ENCODE measurements at regions of chr19 and their contacts with region 1.

Region 1: DNA sequence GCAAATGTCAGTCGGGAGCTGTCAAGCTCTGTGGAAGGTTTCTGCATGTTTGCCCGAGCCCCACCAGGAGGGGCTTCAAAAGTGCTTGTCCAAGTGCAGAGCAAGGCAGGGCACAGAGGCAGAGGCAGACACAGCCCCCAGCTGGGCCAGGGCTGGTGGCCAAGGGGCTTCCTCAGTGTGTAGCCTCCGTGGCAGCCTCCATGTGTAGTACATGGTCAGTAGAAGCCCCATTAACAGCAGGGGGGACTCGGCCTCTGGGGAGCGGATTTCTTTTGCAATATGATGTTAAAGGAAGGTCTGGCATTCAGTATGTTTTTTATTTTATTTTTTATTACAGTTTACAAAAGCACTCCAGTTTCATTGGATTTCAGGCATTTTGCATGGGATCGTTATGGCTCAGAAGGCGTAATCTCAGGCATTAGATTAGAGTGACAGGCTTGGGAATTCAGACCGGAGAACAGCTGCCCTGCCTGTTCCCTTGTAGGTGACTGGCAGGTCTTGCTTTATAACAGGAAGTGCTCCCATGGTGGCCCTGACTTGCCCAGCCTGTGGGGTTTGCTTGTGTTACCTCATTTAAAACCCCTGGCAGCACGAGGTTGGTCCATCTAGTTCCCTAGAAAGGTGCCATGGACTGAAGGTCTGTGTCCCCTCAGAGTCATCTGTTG is 129.2 kb downstream of the KDM4B start:
- DNase-seq: no peak
- H3K4me3 ChIP-seq: no peak overlapping the region
- H3K27ac ChIP-seq: no peak overlapping the region
- H3K4me1 ChIP-seq: peaks cover 0 to 2% of the 10 kb centered on the region in 2 donors
- H3K27me3 ChIP-seq: no peaks in the 10 kb centered on the region
- CTCF ChIP-seq: no peak
- POLR2A ChIP-seq: no peak

Region 2: GRCh38 chr19:5131031-5131505 is 33.0 kb after region 1 on chr19:
- intact Hi-C with region 1: loop called (anchors 1 kb)
- DNase-seq: no peak
- H3K4me3 ChIP-seq: no peak overlapping the region
- H3K27ac ChIP-seq: peak overlapping the region; percentile 23 to 84
- H3K4me1 ChIP-seq: peaks cover 0 to 6% of the 10 kb centered on the region in 2 donors
- H3K27me3 ChIP-seq: no peaks in the 10 kb centered on the region
- CTCF ChIP-seq: no peak
- POLR2A ChIP-seq: no peak